ENCODE measurements at regions of chr4 and their contacts with region 1.

Region 1: GRCh38 chr4:68498413-68499007 is 51.2 kb downstream of the TMPRSS11E start:
- DNase-seq: peak in 2 of 3 donors; percentile 57 to 72
- ATAC-seq: peak; percentile 95
- H3K4me3 ChIP-seq: no peak overlapping the region
- H3K4me1 ChIP-seq: no peaks in the 10 kb centered on the region
- CTCF ChIP-seq: peak; percentile 74

Region 2: GRCh38 chr4:68592673-68593072 is 94.2 kb after region 1 on chr4:
- intact Hi-C with region 1: no loop called
- DNase-seq: no peak
- ATAC-seq: no peak
- H3K4me3 ChIP-seq: no peak overlapping the region
- H3K4me1 ChIP-seq: no peaks in the 10 kb centered on the region
- CTCF ChIP-seq: no peak

Region 3: GRCh38 chr4:69167300-69167699 is 668.8 kb after region 1 on chr4:
- intact Hi-C with region 1: loop called in 1 of 2 experiments (anchors 5 kb)
- DNase-seq: no peak
- ATAC-seq: no peak
- H3K4me3 ChIP-seq: no peak overlapping the region
- H3K4me1 ChIP-seq: no peaks in the 10 kb centered on the region
- CTCF ChIP-seq: no peak

Measured in mucosa of descending colon (tissue), 3 donors.